ENCODE measurements at regions of chr16 and their contacts with region 1.

Region 1: GRCh38 chr16:57300387-57301125 is 16.1 kb upstream of the PLLP start:
- DNase-seq: peak; percentile 98
- H3K4me3 Mint-ChIP-seq: no peak overlapping the region
- H3K27ac Mint-ChIP-seq: no peak overlapping the region
- H3K4me1 Mint-ChIP-seq: peaks cover 30% of the 10 kb centered on the region
- H3K27me3 Mint-ChIP-seq: no peaks in the 10 kb centered on the region
- CTCF ChIP-seq: peak; percentile 94

Region 2: DNA sequence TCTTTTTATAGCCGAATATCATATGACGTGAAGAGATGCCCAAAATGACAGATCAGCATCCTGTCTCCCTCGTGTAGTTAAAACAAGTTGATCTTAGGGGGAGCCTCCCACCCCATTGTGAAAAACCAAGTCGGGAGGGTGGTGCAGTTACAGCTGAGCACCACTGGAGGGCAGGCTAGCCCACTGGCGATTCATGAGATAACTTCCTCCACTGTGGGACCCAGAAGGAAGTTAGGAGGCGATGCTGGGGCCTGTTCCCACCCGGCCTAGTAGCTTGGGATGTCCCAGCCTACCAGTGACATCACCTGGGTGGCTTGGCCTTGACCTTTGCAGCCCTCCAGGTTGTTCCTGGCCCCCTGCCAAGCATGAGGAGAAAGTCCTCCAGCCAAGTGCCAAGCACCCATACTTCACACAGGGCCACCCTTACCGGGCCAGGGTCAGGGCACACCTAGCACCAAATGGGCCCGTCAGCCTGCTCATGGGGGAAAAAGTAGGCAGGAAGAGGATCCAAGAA is 216.2 kb before region 1 on chr16:
- CTCF ChIA-PET with region 1: no interaction called
- intact Hi-C with region 1: loop called (anchors 5 kb)
- DNase-seq: peak; percentile 76
- H3K4me3 Mint-ChIP-seq: no peak overlapping the region
- H3K27ac Mint-ChIP-seq: no peak overlapping the region
- H3K4me1 Mint-ChIP-seq: no peaks in the 10 kb centered on the region
- H3K27me3 Mint-ChIP-seq: peaks cover 66% of the 10 kb centered on the region
- CTCF ChIP-seq: peak; percentile 94

Region 3: DNA sequence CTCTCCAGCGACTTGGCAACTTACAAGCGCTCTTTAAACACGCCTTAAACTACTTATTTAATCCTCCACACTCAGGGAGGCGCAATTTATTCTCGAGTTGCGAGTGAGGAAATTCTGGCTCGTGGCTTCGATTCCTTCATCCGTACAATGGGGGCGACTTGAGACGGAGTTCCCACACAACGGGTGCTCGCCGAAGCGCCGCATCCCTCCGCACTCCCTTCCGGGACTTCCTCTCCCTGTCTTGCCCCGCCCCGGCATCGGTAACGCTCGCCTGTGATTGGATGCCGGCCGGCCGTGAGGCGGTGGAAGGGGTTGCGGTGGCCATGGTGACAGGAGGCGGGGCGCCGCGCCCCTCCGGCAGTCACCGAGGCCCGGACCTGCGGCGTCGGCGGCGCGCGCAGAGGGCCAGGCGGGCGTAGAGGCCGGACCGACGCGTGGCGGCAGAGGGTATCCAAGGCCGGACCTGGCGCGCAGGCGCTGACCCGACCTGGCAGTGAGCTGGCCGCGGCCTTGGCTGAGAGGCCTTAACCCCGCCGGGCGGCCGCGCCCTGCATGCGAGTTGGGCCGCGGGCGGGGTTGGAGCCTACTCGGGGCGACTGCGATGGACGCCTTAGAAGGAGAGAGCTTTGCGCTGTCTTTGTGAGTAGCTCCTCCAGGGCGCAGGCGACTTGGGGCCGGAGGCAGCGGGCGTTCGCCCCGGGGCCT is 55.6 kb before region 1 on chr16 and contains the start of gene ARL2BP:
- CTCF ChIA-PET with region 1: interaction called, 11 read pairs
- intact Hi-C with region 1: loop called (anchors 1 kb)
- DNase-seq: peak; percentile 100
- H3K4me3 Mint-ChIP-seq: peak within 1 kb of the TSS; percentile 82
- H3K27ac Mint-ChIP-seq: peak within 1 kb of the TSS; percentile 97
- H3K4me1 Mint-ChIP-seq: peaks cover 13% of the 10 kb centered on the region
- H3K27me3 Mint-ChIP-seq: no peaks in the 10 kb centered on the region
- CTCF ChIP-seq: no peak
- total RNA-seq, gene ARL2BP: 32.6 and 33.3 TPM in 2 replicates

Region 4: GRCh38 chr16:57341441-57342303 is 41.1 kb after region 1 on chr16:
- CTCF ChIA-PET with region 1: interaction called, 8 read pairs
- intact Hi-C with region 1: loop called (anchors 5 kb)
- DNase-seq: peak; percentile 91
- H3K4me3 Mint-ChIP-seq: peak overlapping the region; percentile 9
- H3K27ac Mint-ChIP-seq: peak overlapping the region; percentile 71
- H3K4me1 Mint-ChIP-seq: peaks cover 55% of the 10 kb centered on the region
- H3K27me3 Mint-ChIP-seq: peaks cover under 1% of the 10 kb centered on the region
- CTCF ChIP-seq: no peak

Region 5: GRCh38 chr16:57377080-57377841 is 76.7 kb after region 1 on chr16:
- CTCF ChIA-PET with region 1: interaction called, 5 read pairs
- intact Hi-C with region 1: loop called (anchors 1 kb)
- DNase-seq: peak; percentile 71
- H3K4me3 Mint-ChIP-seq: peak overlapping the region; percentile 28
- H3K27ac Mint-ChIP-seq: peak overlapping the region; percentile 93
- H3K4me1 Mint-ChIP-seq: peaks cover 78% of the 10 kb centered on the region
- H3K27me3 Mint-ChIP-seq: no peaks in the 10 kb centered on the region
- CTCF ChIP-seq: peak; percentile 60

Region 6: GRCh38 chr16:57422026-57422944 is 121.7 kb after region 1 on chr16:
- CTCF ChIA-PET with region 1: interaction called, 80 read pairs
- intact Hi-C with region 1: loop called (anchors 1 kb)
- DNase-seq: peak; percentile 79
- H3K4me3 Mint-ChIP-seq: no peak overlapping the region
- H3K27ac Mint-ChIP-seq: no peak overlapping the region
- H3K4me1 Mint-ChIP-seq: peaks cover 34% of the 10 kb centered on the region
- H3K27me3 Mint-ChIP-seq: no peaks in the 10 kb centered on the region
- CTCF ChIP-seq: peak; percentile 86